ENCODE measurements at regions of chrX and their contacts with region 1.

Region 1: GRCh38 chrX:65985922-65986588 is 53.8 kb downstream of the VSIG4 start:
- DNase-seq: peak in 1 of 3 donors; percentile 58
- ATAC-seq: peak; percentile 93
- H3K4me3 ChIP-seq: no peak overlapping the region
- H3K4me1 ChIP-seq: no peaks in the 10 kb centered on the region
- CTCF ChIP-seq: no peak

Region 2: GRCh38 chrX:65072590-65072989 is 913.5 kb before region 1 on chrX:
- intact Hi-C with region 1: no loop called
- DNase-seq: no peak
- ATAC-seq: no peak
- H3K4me3 ChIP-seq: no peak overlapping the region
- H3K4me1 ChIP-seq: no peaks in the 10 kb centered on the region
- CTCF ChIP-seq: no peak

Region 3: DNA sequence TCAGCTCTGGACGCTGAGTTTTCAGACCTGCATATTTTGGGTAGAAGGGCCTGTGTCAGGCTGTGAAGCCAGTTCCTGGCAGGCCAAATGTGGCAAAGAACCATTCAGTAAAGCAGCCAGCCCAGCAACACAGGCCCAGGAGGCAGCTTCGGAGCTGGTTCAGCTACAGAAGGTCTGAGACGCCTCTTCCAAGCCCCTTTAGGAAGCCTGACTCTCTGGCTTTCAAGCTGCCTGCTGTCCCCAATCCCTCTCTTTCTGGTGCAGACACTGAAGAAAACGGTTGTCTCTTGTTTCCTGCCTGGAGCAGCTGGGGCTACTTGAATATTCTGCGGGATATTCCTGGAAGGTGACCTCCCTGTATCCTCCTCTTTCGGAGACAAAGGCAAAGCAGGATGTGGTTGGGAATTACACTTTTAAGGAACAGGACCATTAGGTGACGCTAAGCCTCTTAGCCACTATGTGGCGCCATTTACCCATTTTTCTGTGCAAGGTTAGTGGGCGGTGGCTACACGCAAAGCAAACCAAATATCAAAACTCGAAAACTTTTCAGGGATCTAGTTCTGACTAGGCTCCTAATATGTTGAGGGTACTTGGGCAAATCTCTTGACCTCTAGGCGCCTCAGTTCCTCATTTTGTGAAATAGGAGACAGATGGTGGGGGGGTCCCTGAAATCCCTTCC is 404.3 kb before region 1 on chrX:
- intact Hi-C with region 1: loop called (anchors 10 kb)
- DNase-seq: peak in 2 of 3 donors; percentile 37 to 72
- ATAC-seq: peak; percentile 95
- H3K4me3 ChIP-seq: no peak overlapping the region
- H3K4me1 ChIP-seq: no peaks in the 10 kb centered on the region
- CTCF ChIP-seq: peak; percentile 30

Region 4: DNA sequence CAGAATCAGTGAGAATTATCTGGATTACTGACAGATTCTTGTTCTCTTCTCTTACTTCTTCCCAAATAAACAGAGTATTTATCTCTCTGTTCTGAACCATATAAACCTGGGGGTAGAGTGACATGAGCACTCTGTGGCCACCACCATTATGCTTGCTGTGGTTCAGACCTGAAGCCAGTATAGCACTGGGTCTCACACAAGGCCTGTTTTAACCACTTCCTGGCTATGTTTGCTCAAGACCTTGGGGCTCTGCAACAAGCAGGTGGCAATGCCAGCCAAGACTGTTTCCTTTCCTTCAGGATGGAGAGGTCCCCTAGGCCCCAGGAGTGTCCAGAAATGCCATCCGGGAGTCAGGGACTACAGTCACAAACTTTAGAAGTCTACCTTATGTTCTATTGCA is 156.3 kb after region 1 on chrX:
- intact Hi-C with region 1: no loop called
- DNase-seq: no peak
- ATAC-seq: no peak
- H3K4me3 ChIP-seq: no peak overlapping the region
- H3K4me1 ChIP-seq: no peaks in the 10 kb centered on the region
- CTCF ChIP-seq: no peak

Measured in mucosa of descending colon (tissue), 3 donors.